ENCODE measurements at regions of chr9 and their contacts with region 1.

Region 1: GRCh38 chr9:14314929-14315645 is 1.1 kb upstream of the NFIB start:
- DNase-seq: peak; percentile 95 to 98 (median 96)
- H3K4me3 ChIP-seq: peak overlapping the region; percentile 64
- H3K27ac ChIP-seq: peak overlapping the region; percentile 97 to 99
- H3K4me1 ChIP-seq: peaks cover 2% of the 10 kb centered on the region
- H3K27me3 ChIP-seq: no peaks in the 10 kb centered on the region
- CTCF ChIP-seq: peak in 2 of 3 donors; percentile 23 to 25
- EP300 ChIP-seq: no peak
- POLR2A ChIP-seq: peak; percentile 65

Region 2: DNA sequence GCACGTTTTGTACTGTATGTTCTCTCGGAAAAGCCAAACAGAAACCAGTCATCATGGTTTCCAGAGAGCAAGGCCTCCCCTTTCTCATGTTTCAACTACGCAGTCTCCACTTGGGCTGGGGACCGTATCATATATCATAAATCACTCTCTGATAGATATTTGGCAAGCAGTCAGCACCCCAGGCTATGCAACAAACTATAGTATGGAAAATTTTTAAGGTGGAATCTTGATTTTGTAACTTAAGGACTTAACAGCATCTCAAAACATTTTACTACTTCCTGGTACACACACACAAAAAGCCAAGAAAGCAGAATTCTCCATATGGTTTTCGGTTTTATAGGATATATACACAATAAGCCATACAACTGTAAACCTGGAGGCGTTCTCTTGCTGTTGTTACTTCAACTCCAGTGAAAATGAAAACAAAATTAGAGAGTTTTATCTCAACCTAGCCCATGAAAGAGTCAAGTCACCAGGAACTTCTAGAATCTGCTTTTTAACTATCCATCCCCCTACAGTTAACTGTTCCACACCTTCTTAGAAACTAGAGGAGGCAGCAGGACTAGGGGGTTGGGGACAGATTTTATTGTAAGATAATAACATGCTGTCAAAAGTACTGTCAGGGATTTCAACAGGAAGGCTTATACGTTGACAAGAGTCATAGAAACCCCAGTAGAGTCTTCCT is 284.6 kb before region 1 on chr9:
- intact Hi-C with region 1: loop called in 2 of 4 experiments (anchors 10 kb)
- DNase-seq: peak in 3 of 5 donors; percentile 28 to 40 (median 37)
- H3K4me3 ChIP-seq: peak overlapping the region; percentile 28
- H3K27ac ChIP-seq: peak overlapping the region; percentile 3 to 76
- H3K4me1 ChIP-seq: peaks cover 1% of the 10 kb centered on the region
- H3K27me3 ChIP-seq: no peaks in the 10 kb centered on the region
- CTCF ChIP-seq: no peak
- EP300 ChIP-seq: no peak
- POLR2A ChIP-seq: no peak

Region 3: DNA sequence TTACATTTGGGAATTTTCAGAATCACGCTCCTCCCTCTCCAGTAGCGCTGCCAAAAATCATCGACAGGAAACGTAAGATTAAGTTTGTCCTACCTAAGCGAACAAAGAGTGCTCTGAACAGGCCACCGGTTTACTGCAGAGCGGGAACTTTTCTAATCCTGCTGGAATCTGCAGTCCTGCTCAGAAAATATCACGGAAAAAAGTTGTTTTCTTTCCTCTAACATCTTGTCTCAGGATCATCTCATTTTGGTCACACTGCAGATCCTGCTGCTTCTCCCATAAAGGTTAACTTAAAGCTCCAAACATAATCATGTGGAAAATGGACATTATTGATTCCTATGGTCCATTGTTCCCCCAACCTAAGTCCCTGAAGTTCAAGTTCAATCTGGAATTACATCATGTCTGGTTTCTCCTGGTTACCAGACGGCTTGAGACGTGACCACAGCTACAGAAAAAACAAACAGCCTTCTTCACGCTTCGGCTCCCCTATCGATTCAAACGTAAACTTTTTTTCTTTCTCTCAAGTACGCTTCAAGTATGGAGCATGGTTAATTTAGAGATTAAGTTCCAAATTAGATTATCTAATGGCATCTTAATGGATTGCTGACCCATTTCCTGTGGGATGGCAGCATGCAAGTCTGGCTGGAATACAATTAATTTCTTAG is 218.7 kb before region 1 on chr9:
- intact Hi-C with region 1: loop called in 2 of 4 experiments (anchors 10 kb)
- DNase-seq: peak in 1 of 5 donors; percentile 24
- H3K4me3 ChIP-seq: no peak overlapping the region
- H3K27ac ChIP-seq: no peak overlapping the region
- H3K4me1 ChIP-seq: peaks cover 1% of the 10 kb centered on the region
- H3K27me3 ChIP-seq: no peaks in the 10 kb centered on the region
- CTCF ChIP-seq: no peak
- EP300 ChIP-seq: no peak
- POLR2A ChIP-seq: no peak

Region 4: GRCh38 chr9:14107977-14108376 is 207.1 kb before region 1 on chr9:
- intact Hi-C with region 1: loop called in 1 of 4 experiments (anchors 10 kb)
- DNase-seq: no peak
- H3K4me3 ChIP-seq: no peak overlapping the region
- H3K27ac ChIP-seq: no peak overlapping the region
- H3K4me1 ChIP-seq: no peaks in the 10 kb centered on the region
- H3K27me3 ChIP-seq: no peaks in the 10 kb centered on the region
- CTCF ChIP-seq: no peak
- EP300 ChIP-seq: no peak
- POLR2A ChIP-seq: no peak

Region 5: GRCh38 chr9:14203356-14204056 is 111.6 kb before region 1 on chr9:
- intact Hi-C with region 1: loop called in 2 of 4 experiments (anchors 5 to 10 kb)
- DNase-seq: peak; percentile 39 to 76 (median 63)
- H3K4me3 ChIP-seq: no peak overlapping the region
- H3K27ac ChIP-seq: peak overlapping the region in 1 of 2 donors; percentile 52
- H3K4me1 ChIP-seq: peaks cover 7% of the 10 kb centered on the region
- H3K27me3 ChIP-seq: no peaks in the 10 kb centered on the region
- CTCF ChIP-seq: no peak
- EP300 ChIP-seq: no peak
- POLR2A ChIP-seq: no peak

Measured in ovary (tissue), 10 donors.